ENCODE measurements at regions of chr7 and their contacts with region 1.

Region 1: GRCh38 chr7:117673839-117674238 is 194.0 kb downstream of the CFTR start:
- DNase-seq: no peak
- ATAC-seq: peak in 1 of 8 donors; percentile 44
- H3K4me3 ChIP-seq: no peak overlapping the region
- H3K27ac ChIP-seq: no peak overlapping the region
- H3K4me1 ChIP-seq: peaks cover 0 to 6% (median 0%) of the 10 kb centered on the region in 9 donors
- H3K27me3 ChIP-seq: peaks cover 0 to 5% (median 0%) of the 10 kb centered on the region in 7 donors
- CTCF ChIP-seq: peak in 4 of 9 donors; percentile 26 to 39 (median 32)

Region 2: GRCh38 chr7:117119192-117119924 is 554.5 kb before region 1 on chr7:
- intact Hi-C with region 1: no loop called
- DNase-seq: peak; percentile 71 to 82
- ATAC-seq: peak in 6 of 8 donors; percentile 45 to 76 (median 57)
- H3K4me3 ChIP-seq: no peak overlapping the region
- H3K27ac ChIP-seq: no peak overlapping the region
- H3K4me1 ChIP-seq: peaks cover 0 to 30% (median 8%) of the 10 kb centered on the region in 9 donors
- H3K27me3 ChIP-seq: no peaks in the 10 kb centered on the region
- CTCF ChIP-seq: peak; percentile 60 to 94 (median 89)

Region 3: GRCh38 chr7:117479225-117480054 is 194.4 kb before region 1 on chr7 and contains the start of gene CFTR:
- intact Hi-C with region 1: loop called in 1 of 10 experiments (anchors 10 kb)
- DNase-seq: peak in 1 of 2 donors; percentile 2
- ATAC-seq: peak in 4 of 8 donors; percentile 28 to 68 (median 38)
- H3K4me3 ChIP-seq: peak within 1 kb of the TSS in 8 of 10 donors; percentile 19 to 45 (median 29)
- H3K27ac ChIP-seq: no peak within 1 kb of the TSS
- H3K4me1 ChIP-seq: peaks cover 0 to 9% (median 0%) of the 10 kb centered on the region in 9 donors
- H3K27me3 ChIP-seq: peaks cover 5 to 39% (median 35%) of the 10 kb centered on the region in 7 donors
- CTCF ChIP-seq: no peak
- total RNA-seq, gene CFTR: 0.06 to 0.95 (median 0.31) TPM in 8 of 10 donors, not detected in the others

Region 4: DNA sequence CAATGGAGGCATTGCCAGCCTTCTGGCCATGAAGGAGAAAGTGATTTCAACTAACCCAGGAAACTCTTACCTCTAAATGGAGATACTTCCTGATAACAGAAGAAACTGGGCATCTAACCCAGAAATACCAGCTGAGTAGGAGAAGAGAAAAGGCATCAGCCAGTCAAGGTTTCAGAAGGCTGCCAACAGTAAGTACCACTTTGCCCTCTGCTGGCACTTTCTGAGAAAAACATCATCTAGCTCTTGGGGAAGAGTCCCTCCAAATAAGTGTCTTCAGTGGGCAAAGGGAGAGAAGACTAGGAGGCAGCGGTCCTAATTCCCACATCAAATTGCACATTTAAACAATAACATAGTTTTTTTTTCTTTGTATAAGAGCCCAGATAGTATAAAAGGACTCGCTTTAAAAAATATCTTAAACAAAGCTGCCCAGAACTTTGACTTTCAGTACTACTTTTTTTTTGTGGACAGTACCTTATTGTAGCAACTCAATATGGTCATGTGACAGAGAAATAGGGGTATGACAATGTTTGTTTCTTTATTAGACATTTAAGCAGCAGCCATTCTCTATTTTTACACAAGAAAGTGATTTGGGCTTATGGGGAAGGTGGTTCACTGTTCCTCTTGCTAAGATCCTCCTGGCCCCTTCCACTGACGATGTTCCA is 42.1 kb after region 1 on chr7:
- intact Hi-C with region 1: no loop called
- DNase-seq: no peak
- ATAC-seq: peak in 1 of 8 donors; percentile 67
- H3K4me3 ChIP-seq: no peak overlapping the region
- H3K27ac ChIP-seq: no peak overlapping the region
- H3K4me1 ChIP-seq: no peaks in the 10 kb centered on the region
- H3K27me3 ChIP-seq: no peaks in the 10 kb centered on the region
- CTCF ChIP-seq: peak in 8 of 9 donors; percentile 8 to 52 (median 48)